MCF 10A (cell line): ENCODE measurements at regions of chr14 and their contacts with region 1.

Region 1: DNA sequence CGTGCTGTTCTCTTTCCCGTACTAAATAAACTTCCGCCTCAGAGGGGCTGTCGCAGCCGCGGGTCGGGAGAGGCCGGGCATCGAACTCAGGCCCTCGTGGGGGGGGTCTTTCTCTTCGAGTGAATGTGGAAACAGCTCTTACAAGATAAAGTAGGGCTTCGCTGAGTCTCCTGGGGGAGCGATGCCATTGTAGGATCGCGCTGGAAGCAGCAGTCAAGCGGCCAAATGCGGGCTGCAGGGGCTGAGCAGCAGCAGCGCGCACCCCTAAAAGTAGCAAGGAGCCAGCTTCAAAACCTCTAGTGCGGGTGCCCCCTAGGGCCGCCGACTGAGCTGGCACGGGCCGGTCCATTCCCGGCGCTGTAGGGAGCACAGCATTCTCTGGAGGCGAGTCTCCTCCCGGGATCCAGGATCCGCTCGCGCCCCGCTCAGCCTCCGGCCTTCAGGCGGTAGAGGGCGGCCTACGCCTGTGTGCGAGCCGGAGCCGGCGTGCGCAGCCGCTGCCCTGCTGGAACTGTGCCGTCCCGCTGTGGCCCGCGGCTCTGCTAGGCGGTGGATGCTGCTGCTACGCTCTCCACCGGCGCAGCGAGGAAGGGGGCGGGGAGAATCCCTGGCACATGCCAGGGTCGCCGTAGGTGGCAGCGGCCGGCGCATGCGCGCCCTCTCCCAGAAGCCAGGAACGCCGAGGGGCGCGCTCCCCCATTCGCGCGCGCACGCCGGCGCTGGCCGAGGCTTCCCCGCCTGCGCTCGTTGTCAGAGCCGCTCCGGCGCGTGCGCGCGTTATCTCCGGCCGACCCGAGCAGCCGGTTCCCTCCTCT is at the start of gene FUT8:
- DNase-seq: peak; percentile 95
- H3K4me3 Mint-ChIP-seq: peak within 1 kb of the TSS; percentile 94
- H3K27ac Mint-ChIP-seq: peak within 1 kb of the TSS; percentile 93
- H3K4me1 Mint-ChIP-seq: peaks cover 18% of the 10 kb centered on the region
- H3K27me3 Mint-ChIP-seq: no peaks in the 10 kb centered on the region
- CTCF ChIP-seq: peak; percentile 59
- total RNA-seq, gene FUT8: 11.8 and 17.1 TPM in 2 replicates

Region 2: GRCh38 chr14:64986578-64987571 is 425.4 kb before region 1 on chr14 and contains the start of gene FNTB:
- CTCF ChIA-PET with region 1: interaction called, 3 read pairs
- POLR2A ChIA-PET with region 1: interaction called, 3 read pairs
- intact Hi-C with region 1: loop called (anchors 2 kb)
- DNase-seq: peak; percentile 97
- H3K4me3 Mint-ChIP-seq: peak within 1 kb of the TSS; percentile 79
- H3K27ac Mint-ChIP-seq: peak within 1 kb of the TSS; percentile 76
- H3K4me1 Mint-ChIP-seq: peaks cover 10% of the 10 kb centered on the region
- H3K27me3 Mint-ChIP-seq: peaks cover 12% of the 10 kb centered on the region
- CTCF ChIP-seq: peak; percentile 45
- total RNA-seq, gene FNTB: 12.2 and 13.1 TPM in 2 replicates

Region 3: DNA sequence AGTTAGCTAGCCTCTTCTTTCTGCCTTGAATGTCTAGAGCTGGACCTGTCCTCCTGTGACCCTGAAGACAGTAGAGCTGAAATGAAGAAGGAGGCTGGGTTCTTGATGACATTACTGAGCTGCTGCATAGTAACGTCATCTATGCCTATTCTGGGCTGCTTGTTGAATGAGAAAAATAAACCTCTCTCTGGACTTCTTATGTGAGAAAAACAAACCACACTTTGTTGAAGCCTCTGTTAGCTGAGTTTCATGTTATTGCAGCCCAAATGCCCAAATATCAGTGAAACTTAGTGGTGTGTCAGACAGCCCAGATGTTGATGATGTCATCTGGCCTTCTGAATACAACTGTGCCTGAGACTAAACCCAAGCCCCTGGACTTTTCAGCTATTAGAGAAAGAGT is 242.9 kb before region 1 on chr14:
- CTCF ChIA-PET with region 1: interaction called, 70 read pairs
- POLR2A ChIA-PET with region 1: interaction called, 23 read pairs
- intact Hi-C with region 1: loop called (anchors 1 kb)
- DNase-seq: no peak
- H3K4me3 Mint-ChIP-seq: no peak overlapping the region
- H3K27ac Mint-ChIP-seq: peak overlapping the region; percentile 80
- H3K4me1 Mint-ChIP-seq: peaks cover 21% of the 10 kb centered on the region
- H3K27me3 Mint-ChIP-seq: no peaks in the 10 kb centered on the region
- CTCF ChIP-seq: no peak

Region 4: GRCh38 chr14:65228436-65228835 is 183.8 kb before region 1 on chr14:
- CTCF ChIA-PET with region 1: interaction called, 23 read pairs
- POLR2A ChIA-PET with region 1: interaction called, 13 read pairs
- intact Hi-C with region 1: no loop called
- DNase-seq: no peak
- H3K4me3 Mint-ChIP-seq: no peak overlapping the region
- H3K27ac Mint-ChIP-seq: no peak overlapping the region
- H3K4me1 Mint-ChIP-seq: peaks cover 29% of the 10 kb centered on the region
- H3K27me3 Mint-ChIP-seq: no peaks in the 10 kb centered on the region
- CTCF ChIP-seq: no peak

Region 5: GRCh38 chr14:65361920-65362319 is 50.3 kb before region 1 on chr14:
- CTCF ChIA-PET with region 1: interaction called, 7 read pairs
- POLR2A ChIA-PET with region 1: interaction called, 14 read pairs
- intact Hi-C with region 1: loop called (anchors 5 kb)
- DNase-seq: peak; percentile 50
- H3K4me3 Mint-ChIP-seq: no peak overlapping the region
- H3K27ac Mint-ChIP-seq: no peak overlapping the region
- H3K4me1 Mint-ChIP-seq: peaks cover 19% of the 10 kb centered on the region
- H3K27me3 Mint-ChIP-seq: no peaks in the 10 kb centered on the region
- CTCF ChIP-seq: no peak

Region 6: GRCh38 chr14:65585216-65585615 is 173.0 kb after region 1 on chr14:
- CTCF ChIA-PET with region 1: no interaction called
- POLR2A ChIA-PET with region 1: no interaction called
- intact Hi-C with region 1: no loop called
- DNase-seq: peak; percentile 24
- H3K4me3 Mint-ChIP-seq: no peak overlapping the region
- H3K27ac Mint-ChIP-seq: no peak overlapping the region
- H3K4me1 Mint-ChIP-seq: no peaks in the 10 kb centered on the region
- H3K27me3 Mint-ChIP-seq: no peaks in the 10 kb centered on the region
- CTCF ChIP-seq: no peak

Region 7: GRCh38 chr14:65958664-65959562 is 546.7 kb after region 1 on chr14:
- CTCF ChIA-PET with region 1: interaction called, 80 read pairs
- POLR2A ChIA-PET with region 1: no interaction called
- intact Hi-C with region 1: loop called (anchors 1 kb)
- DNase-seq: peak; percentile 50
- H3K4me3 Mint-ChIP-seq: no peak overlapping the region
- H3K27ac Mint-ChIP-seq: no peak overlapping the region
- H3K4me1 Mint-ChIP-seq: no peaks in the 10 kb centered on the region
- H3K27me3 Mint-ChIP-seq: peaks cover 6% of the 10 kb centered on the region
- CTCF ChIP-seq: peak; percentile 44